ENCODE measurements at regions of chr5 and their contacts with region 1.

Region 1: DNA sequence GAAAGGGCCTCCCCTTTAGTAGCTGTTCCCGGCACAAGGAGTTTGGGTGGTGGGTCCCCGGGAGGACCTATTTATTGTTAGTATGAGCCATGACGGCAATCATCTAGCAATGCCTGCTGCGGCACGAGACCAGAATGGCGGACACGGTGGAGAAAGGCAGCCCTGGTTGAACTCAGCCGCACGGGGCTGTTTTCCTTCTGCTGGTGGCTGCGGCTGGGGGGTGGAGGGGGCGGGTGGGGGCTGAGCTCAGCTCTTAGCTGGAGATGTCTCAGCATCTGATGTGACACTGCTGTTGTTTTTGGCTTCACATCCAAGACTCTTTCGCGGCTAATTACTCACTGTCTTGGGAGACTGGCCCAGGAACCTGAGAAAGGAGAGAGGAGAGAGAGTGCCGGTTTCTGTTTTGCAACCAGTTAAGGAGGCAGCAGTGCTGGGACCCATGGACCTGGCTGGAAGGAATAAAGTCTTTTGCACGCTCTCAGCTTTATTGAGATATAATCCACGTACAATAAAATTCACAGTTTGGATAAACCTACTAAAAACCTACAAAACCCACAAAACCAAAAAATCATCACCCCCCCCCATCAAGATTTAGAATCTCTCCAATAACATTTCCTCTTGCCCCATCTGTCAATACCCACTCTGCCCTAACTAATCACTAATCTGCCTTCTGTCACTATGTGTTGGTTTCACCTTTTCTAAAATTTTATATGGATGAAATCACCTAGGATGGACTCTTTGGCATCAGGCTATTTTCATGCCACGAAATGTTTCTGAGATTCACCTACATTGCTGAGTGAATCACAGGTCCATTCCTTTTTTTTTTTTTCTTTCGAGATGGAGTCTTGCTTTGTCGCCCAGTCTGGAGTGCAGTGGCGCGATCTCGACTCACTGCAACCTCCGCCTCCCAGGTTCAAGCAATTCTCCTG is 81.8 kb upstream of the NEURL1B start:
- DNase-seq: peak; percentile 95
- H3K4me3 ChIP-seq: peak overlapping the region in 3 of 4 donors; percentile 16 to 23 (median 17)
- H3K27ac ChIP-seq: peak overlapping the region; percentile 84 to 94 (median 87)
- H3K4me1 ChIP-seq: peaks cover 0 to 89% (median 75%) of the 10 kb centered on the region in 4 donors
- H3K27me3 ChIP-seq: no peaks in the 10 kb centered on the region
- CTCF ChIP-seq: no peak
- EP300 ChIP-seq: peak in 3 of 4 donors; percentile 16 to 66 (median 29)
- POLR2A ChIP-seq: no peak

Region 2: GRCh38 chr5:172524573-172525021 is 34.7 kb before region 1 on chr5:
- intact Hi-C with region 1: loop called (anchors 1 kb)
- DNase-seq: peak; percentile 93
- H3K4me3 ChIP-seq: no peak overlapping the region
- H3K27ac ChIP-seq: peak overlapping the region; percentile 51 to 84 (median 78)
- H3K4me1 ChIP-seq: peaks cover 0 to 60% (median 37%) of the 10 kb centered on the region in 4 donors
- H3K27me3 ChIP-seq: no peaks in the 10 kb centered on the region
- CTCF ChIP-seq: no peak
- EP300 ChIP-seq: peak; percentile 67 to 87 (median 81)
- POLR2A ChIP-seq: no peak

Region 3: GRCh38 chr5:172533399-172534228 is 25.7 kb before region 1 on chr5:
- intact Hi-C with region 1: loop called (anchors 2 kb)
- DNase-seq: peak; percentile 77
- H3K4me3 ChIP-seq: no peak overlapping the region
- H3K27ac ChIP-seq: peak overlapping the region; percentile 84 to 88 (median 86)
- H3K4me1 ChIP-seq: peaks cover 0 to 38% (median 28%) of the 10 kb centered on the region in 4 donors
- H3K27me3 ChIP-seq: no peaks in the 10 kb centered on the region
- CTCF ChIP-seq: no peak
- EP300 ChIP-seq: peak in 3 of 4 donors; percentile 83 to 93 (median 92)
- POLR2A ChIP-seq: no peak

Region 4: GRCh38 chr5:172640822-172641358 is 81.6 kb after region 1 on chr5 and contains the start of gene NEURL1B:
- intact Hi-C with region 1: loop called (anchors 2 kb)
- DNase-seq: peak; percentile 93
- H3K4me3 ChIP-seq: peak within 1 kb of the TSS; percentile 79 to 99 (median 99)
- H3K27ac ChIP-seq: peak within 1 kb of the TSS; percentile 94 to 99 (median 96)
- H3K4me1 ChIP-seq: peaks cover 0 to 52% (median 43%) of the 10 kb centered on the region in 4 donors
- H3K27me3 ChIP-seq: no peaks in the 10 kb centered on the region
- CTCF ChIP-seq: no peak
- EP300 ChIP-seq: no peak
- POLR2A ChIP-seq: peak in 1 of 2 donors; percentile 24
- total RNA-seq, gene NEURL1B: 32.9 to 53.2 (median 45.6) TPM

Region 5: DNA sequence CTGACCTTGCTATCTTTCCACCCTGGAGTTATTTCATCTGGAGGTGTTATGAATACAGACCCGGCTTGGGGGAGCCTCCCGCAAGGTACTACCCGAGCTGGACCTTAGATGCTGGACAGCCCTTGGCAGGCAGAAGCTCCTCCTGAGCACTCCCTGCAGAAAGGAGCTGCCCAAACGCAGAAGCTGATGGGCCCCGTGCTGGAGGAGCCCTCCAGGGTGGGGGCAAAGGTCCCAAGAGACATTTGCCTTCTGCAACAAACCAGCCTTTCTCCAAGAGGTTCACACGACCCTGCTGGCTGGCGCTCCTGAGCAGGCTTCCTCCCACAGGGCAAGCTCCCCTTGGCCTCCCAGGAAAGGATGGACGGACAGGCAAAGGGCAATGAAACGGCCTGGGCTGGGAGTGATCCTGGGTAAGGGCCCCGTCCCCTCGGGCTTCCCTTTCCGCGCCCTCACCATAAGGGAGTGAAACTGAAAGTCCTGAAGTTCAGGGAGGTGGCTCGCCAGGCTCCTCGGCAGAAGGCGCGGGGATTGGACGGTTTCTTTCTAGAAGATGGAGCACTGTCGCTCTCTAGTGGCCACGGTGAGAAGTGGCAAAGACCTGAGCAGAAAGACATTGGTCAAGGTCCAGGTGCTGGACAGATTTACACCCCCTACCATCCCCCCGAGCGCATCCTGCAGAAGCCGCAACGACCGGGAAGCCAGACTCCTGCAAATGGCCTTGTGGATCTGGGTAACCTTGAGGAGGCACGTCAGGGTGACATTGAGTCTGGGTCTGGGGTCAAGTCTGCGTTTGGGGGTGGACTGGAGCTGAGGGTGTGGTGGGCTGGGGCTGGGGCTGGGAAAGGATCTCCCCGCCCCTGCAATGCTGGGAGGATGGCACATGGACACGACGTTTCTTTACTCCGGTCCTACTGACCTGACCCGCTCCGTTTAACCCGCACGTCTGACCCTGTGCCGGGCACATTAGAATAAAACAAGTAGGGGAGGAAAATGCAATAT is 138.2 kb after region 1 on chr5:
- intact Hi-C with region 1: loop called (anchors 2 kb)
- DNase-seq: peak; percentile 95
- H3K4me3 ChIP-seq: peak overlapping the region; percentile 48 to 68 (median 64)
- H3K27ac ChIP-seq: peak overlapping the region; percentile 74 to 91 (median 85)
- H3K4me1 ChIP-seq: peaks cover 0 to 64% (median 61%) of the 10 kb centered on the region in 4 donors
- H3K27me3 ChIP-seq: no peaks in the 10 kb centered on the region
- CTCF ChIP-seq: peak; percentile 94 to 97 (median 94)
- EP300 ChIP-seq: no peak
- POLR2A ChIP-seq: peak in 1 of 2 donors; percentile 32

Region 6: GRCh38 chr5:172868924-172869591 is 309.8 kb after region 1 on chr5:
- intact Hi-C with region 1: loop called (anchors 10 kb)
- DNase-seq: peak; percentile 98
- H3K4me3 ChIP-seq: no peak overlapping the region
- H3K27ac ChIP-seq: peak overlapping the region; percentile 85 to 98 (median 94)
- H3K4me1 ChIP-seq: peaks cover 0 to 90% (median 85%) of the 10 kb centered on the region in 4 donors
- H3K27me3 ChIP-seq: no peaks in the 10 kb centered on the region
- CTCF ChIP-seq: peak in 1 of 4 experiments; percentile 28
- EP300 ChIP-seq: peak; percentile 96 to 100 (median 98)
- POLR2A ChIP-seq: peak in 1 of 2 donors; percentile 9

Region 7: GRCh38 chr5:172902497-172903200 is 343.4 kb after region 1 on chr5:
- intact Hi-C with region 1: loop called (anchors 10 kb)
- DNase-seq: peak; percentile 97
- H3K4me3 ChIP-seq: no peak overlapping the region
- H3K27ac ChIP-seq: peak overlapping the region; percentile 87 to 96 (median 90)
- H3K4me1 ChIP-seq: peaks cover 0 to 85% (median 84%) of the 10 kb centered on the region in 4 donors
- H3K27me3 ChIP-seq: no peaks in the 10 kb centered on the region
- CTCF ChIP-seq: peak in 2 of 4 experiments; percentile 15 to 59
- EP300 ChIP-seq: peak; percentile 43 to 100 (median 86)
- POLR2A ChIP-seq: no peak

Measured in sigmoid colon (tissue), 7 donors.